SK-N-SH (cell line): ENCODE measurements at regions of chr1 and their contacts with region 1.

Region 1: DNA sequence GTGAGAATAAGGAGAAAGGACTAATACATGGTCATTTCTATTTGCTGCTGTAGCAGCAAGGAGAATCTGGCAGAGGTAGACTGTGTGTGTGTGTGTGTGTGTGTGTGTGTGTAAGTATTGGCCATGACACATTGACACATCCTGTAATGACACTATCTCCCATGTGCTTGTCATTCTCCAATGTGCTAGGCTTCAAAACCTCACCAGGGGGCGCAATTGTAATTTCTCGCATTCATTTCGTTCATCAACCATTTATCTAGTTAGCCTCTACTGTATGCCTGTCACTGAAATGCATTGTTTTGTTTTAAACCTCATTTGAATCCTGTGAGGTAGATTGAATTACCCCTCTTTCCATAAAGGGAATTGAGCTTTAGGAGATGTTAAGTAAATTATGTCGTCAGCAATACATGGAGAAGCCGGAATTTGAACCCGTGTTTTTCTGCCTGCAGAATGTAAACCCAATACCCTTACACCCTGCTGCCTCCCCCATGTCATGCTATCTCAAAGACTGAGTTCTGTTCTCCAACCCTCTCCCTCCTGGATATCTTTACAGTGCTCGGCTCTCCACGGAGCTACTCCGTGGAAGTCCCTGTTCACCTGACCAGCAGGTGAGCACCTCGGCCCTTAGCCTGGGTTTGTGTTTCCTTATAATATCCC is 100.8 kb downstream of the UCK2 start:
- DNase-seq: peak; percentile 62
- H3K4me3 ChIP-seq: peak overlapping the region in 1 of 2 experiments; percentile 14; a peak in 1 of 4 replicates
- H3K27ac ChIP-seq: no peak overlapping the region
- H3K4me1 ChIP-seq: no peaks in the 10 kb centered on the region
- H3K27me3 ChIP-seq: no peaks in the 10 kb centered on the region
- CTCF ChIP-seq: peak; percentile 79
- EP300 ChIP-seq: no peak
- RAD21 ChIP-seq: peak; percentile 82

Region 2: DNA sequence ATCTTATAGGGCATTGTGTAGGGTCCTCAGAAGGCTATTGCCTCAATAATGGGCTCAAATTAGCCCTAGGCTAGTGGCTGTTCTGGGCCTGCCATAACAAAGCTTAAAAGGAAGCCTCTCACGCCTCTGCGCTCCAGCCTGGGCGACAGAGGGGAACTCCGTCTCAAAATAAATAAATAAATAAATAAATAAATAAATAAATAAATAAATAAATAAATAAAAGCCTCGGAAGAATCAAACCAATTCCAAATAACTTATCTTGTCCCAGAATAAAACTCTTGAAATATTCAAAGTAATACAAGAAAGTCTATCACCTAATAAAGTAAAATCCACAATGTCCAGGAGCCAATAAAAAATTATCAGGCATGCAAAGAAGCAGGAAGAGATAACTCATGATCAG is 215.4 kb before region 1 on chr1:
- CTCF ChIA-PET with region 1: interaction called, 11 read pairs
- POLR2A ChIA-PET with region 1: no interaction called
- DNase-seq: no peak
- H3K4me3 ChIP-seq: no peak overlapping the region
- H3K27ac ChIP-seq: no peak overlapping the region
- H3K4me1 ChIP-seq: no peaks in the 10 kb centered on the region
- H3K27me3 ChIP-seq: no peaks in the 10 kb centered on the region; the same call in 1 of the 2 replicates
- CTCF ChIP-seq: no peak
- EP300 ChIP-seq: no peak
- RAD21 ChIP-seq: no peak

Region 3: GRCh38 chr1:165942062-165942461 is 13.9 kb after region 1 on chr1:
- CTCF ChIA-PET with region 1: interaction called, 12 read pairs
- POLR2A ChIA-PET with region 1: no interaction called
- DNase-seq: no peak
- H3K4me3 ChIP-seq: no peak overlapping the region
- H3K27ac ChIP-seq: no peak overlapping the region
- H3K4me1 ChIP-seq: no peaks in the 10 kb centered on the region
- H3K27me3 ChIP-seq: no peaks in the 10 kb centered on the region
- CTCF ChIP-seq: no peak
- EP300 ChIP-seq: no peak
- RAD21 ChIP-seq: no peak

Region 4: GRCh38 chr1:166432655-166433054 is 504.5 kb after region 1 on chr1:
- CTCF ChIA-PET with region 1: interaction called, 91 read pairs
- POLR2A ChIA-PET with region 1: no interaction called
- DNase-seq: no peak
- H3K4me3 ChIP-seq: no peak overlapping the region
- H3K27ac ChIP-seq: no peak overlapping the region
- H3K4me1 ChIP-seq: no peaks in the 10 kb centered on the region
- H3K27me3 ChIP-seq: no peaks in the 10 kb centered on the region
- CTCF ChIP-seq: no peak
- EP300 ChIP-seq: no peak
- RAD21 ChIP-seq: no peak